ENCODE measurements at regions of chr20 and their contacts with region 1.

Region 1: DNA sequence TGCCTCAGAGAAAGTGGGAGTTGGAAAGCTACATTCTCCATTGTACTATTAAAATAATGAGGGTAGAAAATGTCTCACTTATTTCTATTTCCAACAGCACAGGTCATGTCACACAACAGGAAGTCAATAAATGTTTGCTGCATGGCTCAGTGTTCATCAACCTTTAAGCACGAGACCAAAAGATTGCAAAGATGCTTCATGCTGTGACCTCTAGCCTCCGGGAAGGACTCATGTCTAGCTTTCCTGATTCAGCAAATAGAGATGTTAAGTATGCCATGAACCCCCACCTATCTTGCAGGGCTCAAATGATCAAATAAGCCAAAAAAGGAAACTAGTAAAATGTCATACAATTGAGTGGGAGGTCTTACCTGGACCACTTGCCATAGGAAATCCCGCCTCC is 57.4 kb downstream of the NCOA6 start:
- DNase-seq: no peak
- ATAC-seq: no peak
- H3K4me3 ChIP-seq: no peak overlapping the region
- H3K27ac ChIP-seq: no peak overlapping the region
- H3K4me1 ChIP-seq: no peaks in the 10 kb centered on the region
- H3K27me3 ChIP-seq: no peaks in the 10 kb centered on the region

Region 2: DNA sequence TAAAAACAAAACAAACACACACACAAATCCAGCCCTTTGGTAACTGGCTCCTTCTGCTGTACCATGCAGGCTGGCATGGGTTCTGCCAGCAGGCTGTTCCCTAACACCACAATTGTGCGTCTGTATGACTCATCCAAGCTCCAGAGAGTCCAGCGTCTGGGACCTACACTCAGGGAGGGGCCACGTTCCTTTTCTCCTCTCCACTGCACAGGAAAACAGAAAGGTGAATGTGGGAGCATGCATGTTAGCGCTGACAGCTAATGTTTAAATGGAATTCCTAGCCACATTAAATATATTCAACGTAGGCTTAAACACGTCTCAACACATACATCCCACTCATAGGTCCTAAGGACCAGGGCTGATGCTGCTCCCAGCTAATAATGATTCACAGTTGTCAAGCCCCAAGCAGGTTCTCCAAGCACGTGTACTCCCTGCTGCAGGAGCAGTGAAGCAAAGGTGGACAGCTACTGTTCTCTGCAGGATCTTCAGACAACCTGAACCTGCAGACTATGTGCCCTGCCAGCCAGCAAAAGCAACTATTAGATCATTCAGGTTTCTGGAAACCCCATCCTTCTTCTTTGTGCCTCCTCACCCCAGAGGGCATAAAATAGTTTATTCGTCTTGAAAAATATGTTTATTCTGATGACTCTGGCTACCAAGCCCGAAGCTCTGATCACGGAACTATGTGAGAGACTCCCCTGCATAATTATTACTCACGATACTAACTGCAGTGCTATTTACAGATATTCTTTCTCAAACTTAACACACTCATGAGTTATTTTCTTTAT is 188.7 kb before region 1 on chr20:
- intact Hi-C with region 1: loop called (anchors 2 kb)
- DNase-seq: peak in 1 of 2 donors; percentile 71
- ATAC-seq: peak; percentile 84
- H3K4me3 ChIP-seq: no peak overlapping the region
- H3K27ac ChIP-seq: no peak overlapping the region
- H3K4me1 ChIP-seq: peaks cover 0 to 3% of the 10 kb centered on the region in 2 donors
- H3K27me3 ChIP-seq: no peaks in the 10 kb centered on the region

Region 3: DNA sequence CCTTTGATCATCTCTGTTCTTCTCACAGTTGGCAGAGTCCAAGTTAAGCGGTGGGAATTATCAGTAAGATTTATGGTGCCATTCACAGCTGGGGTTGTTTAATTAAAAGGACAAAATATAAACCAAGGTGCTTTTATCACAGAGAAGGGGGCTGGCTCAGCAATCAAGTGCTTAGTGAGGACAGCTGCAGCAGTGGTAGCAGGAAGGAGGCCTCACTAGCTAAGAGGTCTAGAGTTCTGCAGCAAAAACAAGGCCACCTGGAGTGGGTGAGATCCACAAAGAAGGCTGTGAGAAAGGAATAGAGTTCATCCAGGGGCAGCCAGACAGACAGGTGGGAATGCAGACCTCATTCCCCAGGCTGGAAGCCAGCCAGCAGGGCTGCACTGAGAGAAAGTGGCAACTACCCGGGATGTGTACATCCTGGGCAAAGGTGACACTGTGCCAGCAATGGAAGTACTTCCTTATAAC is 128.3 kb before region 1 on chr20:
- intact Hi-C with region 1: no loop called
- DNase-seq: no peak
- ATAC-seq: no peak
- H3K4me3 ChIP-seq: no peak overlapping the region
- H3K27ac ChIP-seq: no peak overlapping the region
- H3K4me1 ChIP-seq: no peaks in the 10 kb centered on the region
- H3K27me3 ChIP-seq: no peaks in the 10 kb centered on the region

Measured in aorta (tissue), 5 donors.